ENCODE measurements at regions of chr15 and their contacts with region 1.

Region 1: DNA sequence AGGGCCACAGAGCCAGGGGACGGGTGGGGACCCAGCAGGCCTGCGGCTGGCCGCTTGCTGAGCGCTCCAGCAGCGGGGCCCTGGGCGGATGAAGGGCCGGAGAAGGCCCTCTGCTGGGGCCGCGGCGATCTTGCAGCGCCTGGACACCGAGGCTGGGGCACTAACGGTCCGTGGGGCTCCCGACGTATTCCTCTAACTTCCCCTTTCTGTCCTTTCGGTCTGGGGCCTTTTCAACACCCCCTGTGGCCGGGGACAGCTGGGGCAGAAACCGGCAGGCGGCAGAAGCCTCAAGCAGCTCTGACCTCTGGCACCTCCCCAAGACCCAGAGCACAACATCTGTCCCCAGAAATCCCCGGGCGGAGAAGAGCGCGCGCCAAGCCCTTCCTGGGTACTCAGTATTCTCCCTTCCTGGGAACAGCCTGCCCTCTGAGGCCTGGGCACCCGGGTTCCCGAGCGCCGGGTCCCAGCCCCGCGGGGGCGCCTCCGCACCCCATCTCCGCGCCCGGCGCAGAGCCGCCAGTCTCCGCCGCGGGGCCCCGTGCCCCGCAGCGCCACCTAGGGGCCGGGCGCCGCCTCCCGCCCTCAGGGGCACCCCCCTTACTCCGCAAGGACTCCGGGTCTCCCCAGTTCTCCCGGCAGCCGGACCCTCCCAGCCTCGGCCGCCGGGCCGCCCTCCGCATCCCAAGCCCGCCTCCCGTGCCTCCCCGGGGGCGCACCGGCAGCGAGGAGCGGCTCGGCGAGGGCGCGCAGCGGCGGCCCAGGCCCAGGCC is 582 bp upstream of the SLCO3A1 start:
- DNase-seq: no peak
- ATAC-seq: peak; percentile 65
- H3K4me3 ChIP-seq: 0 out of 2 replicates have a peak overlapping the region, but pooled peaks have one; percentile 11
- H3K27ac ChIP-seq: no peak overlapping the region
- H3K4me1 ChIP-seq: peaks cover 8% of the 10 kb centered on the region
- H3K27me3 ChIP-seq: peaks cover 0 to 13% of the 10 kb centered on the region in 2 experiments; a peak in 2 of 4 replicates
- CTCF ChIP-seq: peak; percentile 56 to 68 (median 63)
- EP300 ChIP-seq: 0 out of 4 replicates have a peak, but pooled peaks of 1 of the 2 experiments have one; percentile 6
- POLR2A ChIP-seq: no peak
- RAD21 ChIP-seq: no peak

Region 2: GRCh38 chr15:91302588-91303439 is 550.1 kb before region 1 on chr15:
- CTCF ChIA-PET with region 1: interaction called, 3 read pairs
- POLR2A ChIA-PET with region 1: no interaction called
- RAD21 ChIA-PET with region 1: no interaction called
- SMC1A ChIA-PET with region 1: interaction called, 4 read pairs
- in situ Hi-C with region 1: no loop called
- intact Hi-C with region 1: loop called (anchors 5 kb)
- DNase-seq: peak; percentile 17
- ATAC-seq: peak; percentile 78
- H3K4me3 ChIP-seq: no peak overlapping the region
- H3K27ac ChIP-seq: no peak overlapping the region
- H3K4me1 ChIP-seq: no peaks in the 10 kb centered on the region
- H3K27me3 ChIP-seq: peaks cover 0 to 3% of the 10 kb centered on the region in 2 experiments; a peak in 1 of 4 replicates
- CTCF ChIP-seq: peak; percentile 67 to 78 (median 70)
- EP300 ChIP-seq: no peak
- POLR2A ChIP-seq: no peak
- RAD21 ChIP-seq: peak; percentile 86

Region 3: DNA sequence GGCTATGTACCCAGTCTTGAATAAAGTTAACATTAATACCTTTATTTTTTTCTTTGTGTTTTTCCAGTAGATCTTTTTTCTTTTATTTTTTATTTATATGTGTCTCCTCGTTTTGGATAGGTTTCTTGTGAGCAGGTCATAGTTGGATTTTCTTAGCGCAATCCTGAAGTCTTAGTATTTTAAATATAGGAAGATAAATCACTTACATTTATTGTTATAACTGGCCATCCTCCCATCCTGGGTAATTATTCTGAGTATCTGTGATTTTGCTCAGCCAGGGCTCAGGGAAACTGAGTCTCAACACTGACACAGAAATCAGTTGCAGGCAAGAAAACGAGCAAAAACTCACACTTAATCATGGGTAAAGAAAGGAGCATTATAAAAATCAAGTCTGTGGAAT is 11.1 kb before region 1 on chr15:
- CTCF ChIA-PET with region 1: no interaction called
- POLR2A ChIA-PET with region 1: no interaction called
- RAD21 ChIA-PET with region 1: no interaction called
- SMC1A ChIA-PET with region 1: no interaction called
- in situ Hi-C with region 1: no loop called
- intact Hi-C with region 1: no loop called
- DNase-seq: no peak
- ATAC-seq: no peak
- H3K4me3 ChIP-seq: no peak overlapping the region
- H3K27ac ChIP-seq: no peak overlapping the region
- H3K4me1 ChIP-seq: no peaks in the 10 kb centered on the region
- H3K27me3 ChIP-seq: no peaks in the 10 kb centered on the region; a peak in 1 of 4 replicates
- CTCF ChIP-seq: no peak
- EP300 ChIP-seq: no peak
- POLR2A ChIP-seq: no peak
- RAD21 ChIP-seq: no peak

Region 4: GRCh38 chr15:91942676-91943576 is 90.0 kb after region 1 on chr15:
- CTCF ChIA-PET with region 1: interaction called, 5 read pairs
- POLR2A ChIA-PET with region 1: no interaction called
- RAD21 ChIA-PET with region 1: no interaction called
- SMC1A ChIA-PET with region 1: no interaction called
- in situ Hi-C with region 1: no loop called
- intact Hi-C with region 1: loop called (anchors 5 kb)
- DNase-seq: no peak
- ATAC-seq: peak; percentile 83
- H3K4me3 ChIP-seq: no peak overlapping the region
- H3K27ac ChIP-seq: no peak overlapping the region
- H3K4me1 ChIP-seq: no peaks in the 10 kb centered on the region
- H3K27me3 ChIP-seq: no peaks in the 10 kb centered on the region
- CTCF ChIP-seq: no peak
- EP300 ChIP-seq: no peak
- POLR2A ChIP-seq: no peak
- RAD21 ChIP-seq: no peak

Region 5: GRCh38 chr15:91975241-91975978 is 122.5 kb after region 1 on chr15:
- CTCF ChIA-PET with region 1: no interaction called
- POLR2A ChIA-PET with region 1: no interaction called
- RAD21 ChIA-PET with region 1: no interaction called
- SMC1A ChIA-PET with region 1: interaction called, 3 read pairs
- in situ Hi-C with region 1: no loop called
- intact Hi-C with region 1: loop called (anchors 2 kb)
- DNase-seq: no peak
- ATAC-seq: peak; percentile 83
- H3K4me3 ChIP-seq: no peak overlapping the region
- H3K27ac ChIP-seq: no peak overlapping the region
- H3K4me1 ChIP-seq: no peaks in the 10 kb centered on the region
- H3K27me3 ChIP-seq: no peaks in the 10 kb centered on the region
- CTCF ChIP-seq: peak in 1 of 3 experiments; percentile 12; a peak in 1 of 6 replicates
- EP300 ChIP-seq: no peak
- POLR2A ChIP-seq: no peak
- RAD21 ChIP-seq: no peak

Region 6: GRCh38 chr15:92069308-92070250 is 216.7 kb after region 1 on chr15:
- CTCF ChIA-PET with region 1: interaction called, 3 read pairs
- POLR2A ChIA-PET with region 1: no interaction called
- RAD21 ChIA-PET with region 1: interaction called, 6 read pairs
- SMC1A ChIA-PET with region 1: interaction called, 4 read pairs
- in situ Hi-C with region 1: no loop called
- intact Hi-C with region 1: loop called (anchors 2 kb)
- DNase-seq: peak; percentile 44
- ATAC-seq: peak; percentile 62
- H3K4me3 ChIP-seq: no peak overlapping the region; the same call in 1 of the 2 replicates
- H3K27ac ChIP-seq: peak overlapping the region; percentile 31; the same call in 1 of the 2 replicates
- H3K4me1 ChIP-seq: peaks cover 28% of the 10 kb centered on the region
- H3K27me3 ChIP-seq: no peaks in the 10 kb centered on the region
- CTCF ChIP-seq: no peak
- EP300 ChIP-seq: peak in 1 of 2 experiments; percentile 38; a peak in 1 of 4 replicates
- POLR2A ChIP-seq: no peak
- RAD21 ChIP-seq: no peak

Region 7: DNA sequence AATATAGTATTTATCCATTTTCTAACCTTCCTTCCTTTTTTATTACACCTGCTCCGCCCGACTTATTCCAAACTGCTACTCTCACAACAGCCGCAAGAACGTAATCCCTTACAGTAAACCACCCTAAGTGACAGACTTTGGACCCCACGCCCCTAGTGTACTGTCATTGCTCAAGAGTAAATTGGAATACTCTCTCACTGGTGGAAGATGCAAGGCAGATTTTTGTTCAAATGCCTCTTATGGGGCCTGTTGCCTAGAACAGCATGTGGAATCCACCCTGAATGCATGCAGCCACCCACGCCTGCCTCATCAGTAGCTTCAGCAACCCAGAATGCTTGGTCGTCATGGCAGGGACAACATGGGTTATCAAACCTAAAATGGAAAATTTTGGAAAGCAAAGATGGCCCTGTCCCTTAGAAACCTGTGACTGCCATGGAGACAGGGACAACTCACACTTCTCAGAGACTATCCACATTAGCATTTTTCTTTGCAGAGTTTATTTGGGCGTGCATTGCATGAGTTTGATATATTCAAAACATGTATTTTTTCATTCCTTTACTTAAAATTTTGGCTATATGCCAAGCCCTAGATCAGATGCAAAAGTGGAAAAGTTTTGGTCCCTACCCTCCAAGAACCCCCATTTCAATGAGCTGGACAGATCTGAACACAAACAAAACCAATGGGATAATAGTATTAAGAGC is 314.7 kb after region 1 on chr15:
- CTCF ChIA-PET with region 1: no interaction called
- POLR2A ChIA-PET with region 1: no interaction called
- RAD21 ChIA-PET with region 1: no interaction called
- SMC1A ChIA-PET with region 1: no interaction called
- in situ Hi-C with region 1: no loop called
- intact Hi-C with region 1: no loop called
- DNase-seq: no peak
- ATAC-seq: no peak
- H3K4me3 ChIP-seq: no peak overlapping the region
- H3K27ac ChIP-seq: no peak overlapping the region
- H3K4me1 ChIP-seq: no peaks in the 10 kb centered on the region
- H3K27me3 ChIP-seq: no peaks in the 10 kb centered on the region
- CTCF ChIP-seq: no peak
- EP300 ChIP-seq: no peak
- POLR2A ChIP-seq: no peak
- RAD21 ChIP-seq: no peak

Measured in GM12878 (cell line).